Activated naive CD4-positive, alpha-beta T cell treated with anti-CD3 and anti-CD28 coated beads for 36 hours (primary cell): ENCODE measurements at regions of chr7 and their contacts with region 1.

Region 1: GRCh38 chr7:106947244-106947728 is 82.2 kb downstream of the PIK3CG start:
- DNase-seq: peak; percentile 48
- H3K4me3 Mint-ChIP-seq: no peak overlapping the region
- H3K27ac Mint-ChIP-seq: no peak overlapping the region
- H3K4me1 Mint-ChIP-seq: no peaks in the 10 kb centered on the region
- H3K27me3 Mint-ChIP-seq: peaks cover 1% of the 10 kb centered on the region

Region 2: DNA sequence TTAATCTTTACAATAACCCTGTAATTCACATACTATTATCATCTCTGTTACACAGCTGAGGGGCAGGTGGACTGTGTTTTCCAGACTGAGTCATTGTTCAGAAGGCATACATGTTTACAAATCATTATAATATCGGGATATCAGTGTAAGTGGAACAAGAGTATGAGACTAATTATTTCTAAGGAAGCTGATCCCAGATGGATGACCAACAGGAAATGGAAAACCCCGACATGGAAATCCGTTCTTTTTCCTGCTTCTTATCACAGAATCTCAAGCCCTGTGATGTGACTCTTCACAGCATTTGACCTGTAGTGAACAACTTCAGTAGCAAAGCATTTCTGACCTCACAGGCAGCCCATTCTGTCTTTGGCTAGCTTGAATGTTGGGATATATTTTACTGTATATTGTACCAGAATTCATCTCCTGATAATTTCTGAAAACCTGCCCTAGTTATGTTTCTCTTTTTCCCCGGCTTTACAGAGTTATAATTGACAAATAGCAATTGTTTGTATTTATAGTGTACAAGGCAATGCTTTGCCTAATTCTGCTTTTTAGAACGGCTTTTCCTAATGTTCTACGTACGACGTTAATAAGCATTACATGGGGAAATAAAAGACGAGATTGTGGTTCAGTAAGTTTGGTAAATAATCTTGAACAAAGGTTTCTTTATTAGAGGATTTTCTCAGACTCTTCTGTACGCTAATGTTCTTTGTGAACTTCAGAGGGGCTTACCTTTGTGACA is 756.5 kb before region 1 on chr7:
- CTCF ChIA-PET with region 1: no interaction called
- intact Hi-C with region 1: no loop called
- DNase-seq: no peak
- H3K4me3 Mint-ChIP-seq: no peak overlapping the region
- H3K27ac Mint-ChIP-seq: no peak overlapping the region
- H3K4me1 Mint-ChIP-seq: no peaks in the 10 kb centered on the region
- H3K27me3 Mint-ChIP-seq: peaks cover 12% of the 10 kb centered on the region

Region 3: GRCh38 chr7:106793015-106793975 is 154.0 kb before region 1 on chr7:
- CTCF ChIA-PET with region 1: interaction called, 8 read pairs
- intact Hi-C with region 1: loop called (anchors 2 kb)
- DNase-seq: peak; percentile 54
- H3K4me3 Mint-ChIP-seq: no peak overlapping the region
- H3K27ac Mint-ChIP-seq: no peak overlapping the region
- H3K4me1 Mint-ChIP-seq: no peaks in the 10 kb centered on the region
- H3K27me3 Mint-ChIP-seq: no peaks in the 10 kb centered on the region

Region 4: DNA sequence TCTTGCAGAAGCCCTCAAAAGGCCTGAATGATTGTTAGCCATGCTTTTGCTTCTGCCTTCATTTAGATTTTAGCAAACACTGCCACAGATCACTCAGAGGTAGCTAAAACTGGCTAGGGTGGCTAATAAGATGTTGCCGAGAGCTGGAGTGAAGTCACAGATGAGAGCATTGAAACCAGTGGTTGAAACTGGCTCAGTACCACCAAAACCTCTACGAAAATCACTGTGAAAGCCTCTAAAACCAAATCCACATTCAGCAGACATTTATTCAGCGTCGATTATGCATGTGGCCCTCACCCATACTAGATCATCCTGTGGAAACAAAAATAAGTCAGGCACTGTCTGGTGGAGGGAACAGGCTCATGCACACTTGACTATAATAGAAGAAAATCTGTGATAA is 31.4 kb before region 1 on chr7:
- CTCF ChIA-PET with region 1: no interaction called
- intact Hi-C with region 1: no loop called
- DNase-seq: no peak
- H3K4me3 Mint-ChIP-seq: no peak overlapping the region
- H3K27ac Mint-ChIP-seq: no peak overlapping the region
- H3K4me1 Mint-ChIP-seq: no peaks in the 10 kb centered on the region
- H3K27me3 Mint-ChIP-seq: no peaks in the 10 kb centered on the region